ENCODE measurements at regions of chr11 and their contacts with region 1.

Region 1: GRCh38 chr11:130861902-130862860 is 54.1 kb downstream of the SNX19 start:
- DNase-seq: peak; percentile 92 to 94
- H3K4me3 ChIP-seq: peak overlapping the region in 1 of 2 donors; percentile 17
- H3K27ac ChIP-seq: peak overlapping the region; percentile 78 to 82
- H3K4me1 ChIP-seq: peaks cover 0 to 59% (median 42%) of the 10 kb centered on the region in 4 donors
- H3K27me3 ChIP-seq: no peaks in the 10 kb centered on the region
- CTCF ChIP-seq: peak; percentile 100

Region 2: DNA sequence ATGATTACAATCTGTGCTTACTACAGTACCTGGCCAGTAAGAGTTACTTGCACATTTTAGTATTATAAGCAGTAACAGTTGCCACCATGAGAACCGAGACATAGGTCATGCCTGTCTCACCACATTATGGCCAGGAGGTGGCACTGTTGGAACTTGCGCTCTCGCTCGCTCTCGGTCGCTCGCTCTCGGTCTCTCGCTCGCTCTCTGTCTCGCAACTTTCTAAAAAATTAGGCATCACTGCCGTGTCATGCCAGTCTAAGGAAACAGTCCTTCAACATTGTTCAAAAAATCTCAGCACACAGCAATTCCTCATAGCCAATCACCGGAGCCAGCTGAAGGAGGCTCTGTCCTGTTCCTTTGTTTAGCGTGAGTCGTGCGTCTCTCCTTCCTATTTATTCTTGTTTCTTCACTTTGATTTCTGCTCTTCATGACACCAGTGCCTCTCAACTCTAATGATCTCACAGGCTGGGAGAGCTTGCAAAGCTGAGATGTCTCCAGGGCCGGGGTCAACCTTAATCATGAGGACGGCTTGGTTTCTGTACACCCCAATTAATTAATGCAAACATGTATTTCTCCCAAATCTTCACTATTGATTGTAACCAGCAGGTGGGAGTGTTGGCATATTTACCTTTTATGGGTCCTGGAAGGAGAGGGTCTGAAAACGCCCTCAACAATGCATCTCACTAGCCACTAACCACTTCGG is 427.5 kb before region 1 on chr11:
- intact Hi-C with region 1: loop called (anchors 2 kb)
- DNase-seq: peak; percentile 70 to 86
- H3K4me3 ChIP-seq: peak overlapping the region; percentile 53 to 59
- H3K27ac ChIP-seq: peak overlapping the region; percentile 74 to 80
- H3K4me1 ChIP-seq: peaks cover 0 to 21% (median 7%) of the 10 kb centered on the region in 4 donors
- H3K27me3 ChIP-seq: no peaks in the 10 kb centered on the region
- CTCF ChIP-seq: peak; percentile 68 to 89

Region 3: DNA sequence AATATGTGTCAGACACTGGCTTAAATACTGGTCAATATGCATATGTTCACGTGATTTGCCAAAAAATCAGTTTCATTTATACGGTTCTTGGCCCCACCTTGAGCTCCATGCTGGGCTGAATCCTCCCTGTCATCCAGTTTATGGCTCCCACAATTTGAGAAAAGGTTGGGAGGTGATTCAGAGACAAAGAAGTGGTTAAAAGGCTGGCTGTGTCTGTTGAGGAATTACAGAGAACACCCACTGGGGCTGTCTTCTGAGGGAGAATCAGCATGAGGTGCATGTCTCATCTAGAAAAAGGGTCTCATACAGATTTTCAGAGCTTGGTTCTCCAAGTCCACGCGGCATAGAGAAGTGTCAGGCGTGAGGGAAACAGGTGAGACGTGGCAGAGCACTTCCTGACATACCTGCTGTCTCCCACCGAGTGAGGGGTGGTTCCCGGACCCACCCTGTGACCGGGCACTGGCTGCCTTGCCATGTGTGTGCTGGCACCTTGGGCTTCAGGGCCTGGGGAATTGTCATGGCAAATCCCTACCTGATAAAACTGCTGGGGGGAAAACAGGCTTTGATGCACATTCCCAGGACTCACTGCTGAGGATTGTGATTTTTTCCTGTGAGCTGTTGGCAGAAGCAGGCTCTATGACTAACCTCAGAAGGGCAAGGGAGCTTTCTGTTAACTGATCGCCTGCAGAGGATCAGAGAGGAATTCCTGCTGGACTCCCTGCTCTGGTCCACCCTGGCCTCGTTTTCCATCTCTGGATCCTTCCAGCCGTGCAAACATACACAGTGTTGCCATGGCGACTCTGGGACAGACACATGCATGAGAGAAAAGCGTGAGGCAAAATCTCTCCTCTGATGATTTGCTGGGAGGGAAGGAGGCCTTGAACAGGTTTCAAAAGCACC is 190.1 kb before region 1 on chr11:
- intact Hi-C with region 1: loop called (anchors 10 kb)
- DNase-seq: peak; percentile 79 to 89
- H3K4me3 ChIP-seq: no peak overlapping the region
- H3K27ac ChIP-seq: peak overlapping the region; percentile 81 to 85
- H3K4me1 ChIP-seq: peaks cover 0 to 66% (median 40%) of the 10 kb centered on the region in 4 donors
- H3K27me3 ChIP-seq: no peaks in the 10 kb centered on the region
- CTCF ChIP-seq: no peak

Region 4: GRCh38 chr11:130827451-130828377 is 34.5 kb before region 1 on chr11:
- intact Hi-C with region 1: loop called (anchors 2 kb)
- DNase-seq: peak; percentile 66 to 90
- H3K4me3 ChIP-seq: no peak overlapping the region
- H3K27ac ChIP-seq: peak overlapping the region; percentile 63 to 77
- H3K4me1 ChIP-seq: peaks cover 0 to 55% (median 43%) of the 10 kb centered on the region in 4 donors
- H3K27me3 ChIP-seq: no peaks in the 10 kb centered on the region
- CTCF ChIP-seq: peak; percentile 56 to 59

Region 5: DNA sequence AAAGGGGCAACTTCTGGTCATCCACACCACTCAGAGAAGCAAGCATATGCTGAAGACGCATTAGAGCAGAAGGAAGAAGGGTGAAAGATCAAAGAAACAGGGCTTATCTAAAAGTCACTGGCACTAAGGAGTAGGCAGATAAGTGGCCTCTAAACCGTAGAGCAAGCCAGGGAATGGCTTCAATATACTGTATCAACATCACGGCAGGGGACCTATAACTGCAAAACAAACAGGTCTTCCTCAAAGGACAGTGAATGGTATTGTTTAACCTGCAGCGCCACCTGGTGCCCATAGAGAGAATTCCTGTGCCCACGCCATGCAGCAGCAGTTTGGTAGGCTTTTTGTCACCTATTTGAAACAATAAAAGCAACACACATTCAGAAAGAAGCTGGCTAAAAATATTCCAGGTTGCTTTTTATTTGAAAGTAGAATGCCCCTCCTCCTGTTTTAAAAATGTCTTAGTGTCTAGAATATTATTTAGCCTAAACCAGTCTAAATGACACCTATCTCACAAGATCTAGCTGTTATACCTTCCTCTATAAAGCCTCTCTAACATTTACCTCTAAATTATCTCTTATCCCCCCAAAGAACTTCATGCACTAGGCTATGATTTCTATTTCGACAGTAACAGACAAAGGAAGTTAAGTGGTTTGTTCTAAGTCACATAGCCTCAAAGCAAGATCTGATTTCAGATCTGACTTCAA is 32.3 kb after region 1 on chr11:
- intact Hi-C with region 1: loop called (anchors 2 kb)
- DNase-seq: peak; percentile 74 to 86
- H3K4me3 ChIP-seq: no peak overlapping the region
- H3K27ac ChIP-seq: peak overlapping the region; percentile 82 to 86
- H3K4me1 ChIP-seq: peaks cover 3 to 80% (median 48%) of the 10 kb centered on the region in 4 donors
- H3K27me3 ChIP-seq: no peaks in the 10 kb centered on the region
- CTCF ChIP-seq: peak; percentile 90 to 94

Measured in tibial artery (tissue), 4 donors.